Heart left ventricle (tissue), 16 donors: ENCODE measurements at regions of chr7 and their contacts with region 1.

Region 1: GRCh38 chr7:101815835-101816493 is 1.5 kb upstream of the CUX1 start:
- DNase-seq: peak; percentile 76 to 88 (median 84)
- ATAC-seq: peak; percentile 48 to 85 (median 80)
- H3K4me3 ChIP-seq: peak overlapping the region in 11 of 12 donors; percentile 36 to 96 (median 80)
- H3K27ac ChIP-seq: peak overlapping the region; percentile 40 to 86 (median 79)
- H3K4me1 ChIP-seq: peaks cover 0 to 52% (median 27%) of the 10 kb centered on the region in 12 donors
- H3K27me3 ChIP-seq: peaks cover 0 to 5% (median 0%) of the 10 kb centered on the region in 9 donors
- CTCF ChIP-seq: peak in 6 of 12 donors; percentile 12 to 39 (median 29)
- POLR2A ChIP-seq: no peak

Region 2: DNA sequence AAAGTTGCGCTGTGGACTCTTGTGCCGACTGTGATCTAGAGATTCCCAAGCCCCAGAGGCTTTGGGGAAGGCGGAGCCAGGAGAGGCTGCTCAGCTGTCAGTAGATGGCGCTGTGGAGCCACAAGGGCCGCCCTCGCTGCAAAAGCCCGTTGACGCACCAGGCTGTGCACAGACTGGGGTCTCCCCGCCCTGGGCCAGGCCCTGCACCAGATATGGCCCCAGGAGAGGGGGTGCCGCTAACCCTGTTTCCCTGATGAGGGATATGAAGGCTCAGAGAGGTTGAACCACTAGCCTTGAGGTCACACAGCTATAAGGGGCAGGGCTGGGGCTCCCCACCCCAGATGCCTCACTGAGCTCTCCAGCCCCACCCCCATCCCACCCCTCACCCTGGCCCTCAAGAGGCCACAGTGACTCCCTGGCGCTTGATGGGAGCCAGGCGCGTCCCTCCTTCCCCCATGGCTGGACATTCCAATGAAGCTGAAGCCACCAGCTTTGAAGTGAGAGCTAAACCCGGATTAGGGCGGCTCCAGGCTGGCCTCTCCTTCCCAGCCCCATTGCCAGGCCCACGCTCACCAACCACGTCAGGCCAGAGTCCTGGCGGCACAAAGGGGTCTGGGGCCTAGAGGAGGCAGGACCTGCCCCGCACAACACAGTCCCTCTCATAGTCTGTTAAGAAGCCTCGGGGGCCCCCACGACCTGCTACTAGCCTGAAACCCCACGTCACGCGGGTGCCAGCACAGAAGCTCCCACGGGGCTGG is 213.3 kb before region 1 on chr7:
- intact Hi-C with region 1: loop called in 6 of 10 experiments (anchors 5 to 10 kb)
- DNase-seq: peak; percentile 71 to 87 (median 75)
- ATAC-seq: peak; percentile 75 to 95 (median 84)
- H3K4me3 ChIP-seq: no peak overlapping the region
- H3K27ac ChIP-seq: no peak overlapping the region
- H3K4me1 ChIP-seq: peaks cover 0 to 8% (median 0%) of the 10 kb centered on the region in 12 donors
- H3K27me3 ChIP-seq: peaks cover 0 to 6% (median 0%) of the 10 kb centered on the region in 9 donors
- CTCF ChIP-seq: peak; percentile 77 to 95 (median 89)
- POLR2A ChIP-seq: no peak

Region 3: GRCh38 chr7:101743241-101743994 is 72.5 kb before region 1 on chr7:
- intact Hi-C with region 1: loop called (anchors 1 to 5 kb)
- DNase-seq: peak; percentile 31 to 72 (median 48)
- ATAC-seq: peak; percentile 33 to 85 (median 64)
- H3K4me3 ChIP-seq: peak overlapping the region; percentile 29 to 68 (median 51)
- H3K27ac ChIP-seq: no peak overlapping the region
- H3K4me1 ChIP-seq: peaks cover 0 to 34% (median 3%) of the 10 kb centered on the region in 12 donors
- H3K27me3 ChIP-seq: peaks cover 0 to 19% (median 4%) of the 10 kb centered on the region in 9 donors
- CTCF ChIP-seq: peak; percentile 36 to 77 (median 64)
- POLR2A ChIP-seq: no peak

Region 4: DNA sequence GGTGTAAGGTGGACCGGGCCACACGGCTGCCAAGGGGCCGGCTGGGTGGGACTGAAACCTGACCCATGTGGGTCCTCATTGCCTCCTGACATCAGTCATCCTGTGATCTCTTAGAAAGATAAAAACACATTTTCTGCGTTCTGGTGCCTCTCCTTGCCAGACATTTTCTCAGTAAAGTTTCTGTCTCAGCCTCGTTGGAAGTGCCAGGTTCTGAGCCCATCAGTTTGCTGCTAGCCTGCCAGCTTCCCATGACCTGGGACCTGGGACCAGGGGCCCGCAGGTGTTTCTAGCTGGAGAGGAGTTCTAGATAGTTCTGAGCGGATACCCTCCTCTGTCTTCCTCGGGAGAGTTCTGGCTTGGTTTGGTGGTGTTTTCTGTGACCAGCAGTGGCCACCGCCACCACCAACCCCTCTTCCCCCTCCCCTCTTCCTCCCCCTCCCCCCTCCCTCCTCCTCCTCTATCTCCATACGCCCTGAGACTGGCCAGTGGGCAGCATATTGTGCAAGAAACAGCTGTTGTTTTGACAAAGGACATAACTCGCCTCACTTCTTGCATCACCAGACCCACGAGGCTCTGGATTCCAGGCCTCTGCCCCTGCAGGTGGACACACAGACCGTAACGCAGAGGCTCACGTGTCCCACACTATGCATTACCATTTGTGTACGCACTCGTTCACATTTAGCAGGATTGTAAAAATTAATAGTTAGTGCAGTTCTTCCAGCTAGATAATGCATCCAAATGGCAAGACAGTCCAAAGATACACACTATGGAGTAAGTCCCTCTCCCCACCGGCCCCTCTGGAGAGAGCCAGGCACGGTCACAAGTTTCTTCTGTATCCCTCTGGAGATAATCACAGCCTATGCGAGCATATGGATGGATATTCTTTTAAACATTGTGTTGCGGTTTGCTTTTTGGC is 96.1 kb after region 1 on chr7:
- intact Hi-C with region 1: no loop called
- DNase-seq: peak in 2 of 5 donors; percentile 75 to 79
- ATAC-seq: peak; percentile 29 to 77 (median 56)
- H3K4me3 ChIP-seq: no peak overlapping the region
- H3K27ac ChIP-seq: peak overlapping the region; percentile 51 to 87 (median 70)
- H3K4me1 ChIP-seq: peaks cover 0 to 47% (median 29%) of the 10 kb centered on the region in 12 donors
- H3K27me3 ChIP-seq: no peaks in the 10 kb centered on the region
- CTCF ChIP-seq: no peak
- POLR2A ChIP-seq: no peak

Region 5: DNA sequence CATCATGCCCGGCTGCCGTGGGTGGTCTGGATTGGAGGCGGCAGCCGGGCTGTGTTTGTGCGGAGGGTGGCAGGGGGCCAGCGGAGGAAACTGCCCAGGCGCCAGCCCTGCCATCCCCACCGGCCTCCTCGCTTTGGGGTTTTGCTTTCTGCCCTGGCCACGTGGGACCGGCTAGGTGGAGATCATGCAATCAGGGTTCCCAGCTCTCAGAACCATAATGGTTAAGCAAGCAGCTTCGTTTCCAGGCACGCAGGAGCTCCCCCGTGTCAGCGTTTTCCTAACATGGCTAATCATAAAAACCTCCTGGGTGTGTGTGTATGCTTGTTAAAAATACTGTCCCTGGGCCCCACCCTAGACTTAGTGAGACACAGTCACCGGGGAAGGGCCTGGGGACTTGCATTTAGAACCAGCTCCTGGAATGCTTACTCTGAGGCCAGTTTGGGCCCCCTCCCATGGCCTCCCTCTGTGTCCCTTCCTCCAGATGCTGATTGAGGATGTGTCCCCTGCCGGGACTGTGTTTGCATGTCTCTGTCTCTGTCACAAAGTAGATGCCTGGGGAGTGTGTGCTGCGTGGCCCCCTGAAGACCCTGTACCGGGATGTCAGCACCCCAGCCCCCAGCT is 120.8 kb after region 1 on chr7:
- intact Hi-C with region 1: loop called in 2 of 10 experiments (anchors 5 to 10 kb)
- DNase-seq: peak in 4 of 5 donors; percentile 40 to 64 (median 46)
- ATAC-seq: peak in 3 of 4 donors; percentile 29 to 47 (median 36)
- H3K4me3 ChIP-seq: peak overlapping the region in 11 of 12 donors; percentile 15 to 50 (median 38)
- H3K27ac ChIP-seq: peak overlapping the region; percentile 74 to 97 (median 88)
- H3K4me1 ChIP-seq: peaks cover 3 to 64% (median 53%) of the 10 kb centered on the region in 12 donors
- H3K27me3 ChIP-seq: no peaks in the 10 kb centered on the region
- CTCF ChIP-seq: no peak
- POLR2A ChIP-seq: no peak

Region 6: GRCh38 chr7:102230593-102230992 is 414.6 kb after region 1 on chr7:
- intact Hi-C with region 1: loop called in 6 of 10 experiments (anchors 5 to 10 kb)
- DNase-seq: no peak
- ATAC-seq: no peak
- H3K4me3 ChIP-seq: no peak overlapping the region
- H3K27ac ChIP-seq: no peak overlapping the region
- H3K4me1 ChIP-seq: peaks cover 0 to 11% (median 0%) of the 10 kb centered on the region in 12 donors
- H3K27me3 ChIP-seq: no peaks in the 10 kb centered on the region
- CTCF ChIP-seq: no peak
- POLR2A ChIP-seq: no peak